ENCODE measurements at regions of chr5 and their contacts with region 1.

Region 1: DNA sequence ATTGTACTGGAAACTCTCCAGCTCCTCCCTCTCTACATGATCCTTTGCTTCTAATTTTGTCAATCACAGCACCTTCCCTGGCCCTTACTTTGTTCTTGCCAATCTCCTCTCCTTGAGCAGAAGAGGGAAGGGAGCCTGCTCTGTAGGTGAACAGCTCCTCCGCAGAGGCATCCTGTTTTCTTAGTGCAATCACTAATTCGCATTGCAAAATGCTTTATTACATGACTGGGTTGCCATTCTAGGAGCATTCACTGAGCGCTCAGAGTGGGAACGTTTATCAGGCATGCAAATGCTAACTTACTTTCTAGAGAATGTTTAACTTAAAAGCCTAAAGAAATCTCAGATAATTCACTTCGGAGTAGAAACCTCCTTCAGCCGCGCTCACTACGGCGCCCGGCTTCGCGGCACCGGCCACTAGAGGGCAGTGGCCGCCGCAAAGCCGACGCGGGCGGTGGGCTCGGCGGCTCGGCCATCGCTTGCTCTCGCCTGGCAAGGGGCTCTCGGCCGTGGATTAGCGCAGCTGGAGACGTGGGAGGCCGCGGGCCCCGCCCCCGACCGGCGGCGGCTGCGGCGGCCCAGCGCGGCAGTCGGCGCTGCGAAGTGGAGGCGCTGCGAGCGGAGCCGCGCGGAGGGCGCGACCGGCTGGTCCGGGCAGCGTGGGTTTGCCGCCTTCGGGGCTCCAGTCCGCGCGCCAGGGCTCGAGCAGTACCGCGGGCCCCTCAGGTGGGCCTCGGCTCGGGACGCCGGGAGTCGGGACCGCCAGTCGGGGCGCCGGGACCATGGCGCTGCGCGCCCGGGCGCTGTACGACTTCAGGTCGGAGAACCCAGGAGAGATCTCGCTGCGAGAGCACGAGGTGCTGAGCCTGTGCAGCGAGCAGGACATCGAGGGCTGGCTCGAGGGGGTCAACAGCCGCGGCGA is at the start of gene SNX18:
- DNase-seq: peak; percentile 92 to 95
- H3K4me3 ChIP-seq: peak within 1 kb of the TSS; percentile 86 to 98
- H3K27ac ChIP-seq: peak within 1 kb of the TSS; percentile 92 to 97
- H3K4me1 ChIP-seq: peaks cover 0 to 37% (median 12%) of the 10 kb centered on the region in 4 donors
- H3K27me3 ChIP-seq: no peaks in the 10 kb centered on the region
- CTCF ChIP-seq: peak; percentile 98 to 99

Region 2: GRCh38 chr5:54637654-54638053 is 120.2 kb after region 1 on chr5:
- intact Hi-C with region 1: loop called (anchors 10 kb)
- DNase-seq: peak; percentile 62 to 86
- H3K4me3 ChIP-seq: no peak overlapping the region
- H3K27ac ChIP-seq: peak overlapping the region; percentile 35 to 37
- H3K4me1 ChIP-seq: peaks cover 5 to 51% (median 28%) of the 10 kb centered on the region in 4 donors
- H3K27me3 ChIP-seq: no peaks in the 10 kb centered on the region
- CTCF ChIP-seq: no peak

Region 3: GRCh38 chr5:54844905-54845566 is 327.6 kb after region 1 on chr5:
- intact Hi-C with region 1: loop called (anchors 1 kb)
- DNase-seq: no peak
- H3K4me3 ChIP-seq: peak overlapping the region; percentile 25 to 34
- H3K27ac ChIP-seq: peak overlapping the region; percentile 67 to 75
- H3K4me1 ChIP-seq: peaks cover 0 to 17% (median 10%) of the 10 kb centered on the region in 4 donors
- H3K27me3 ChIP-seq: no peaks in the 10 kb centered on the region
- CTCF ChIP-seq: peak; percentile 61 to 75

Region 4: DNA sequence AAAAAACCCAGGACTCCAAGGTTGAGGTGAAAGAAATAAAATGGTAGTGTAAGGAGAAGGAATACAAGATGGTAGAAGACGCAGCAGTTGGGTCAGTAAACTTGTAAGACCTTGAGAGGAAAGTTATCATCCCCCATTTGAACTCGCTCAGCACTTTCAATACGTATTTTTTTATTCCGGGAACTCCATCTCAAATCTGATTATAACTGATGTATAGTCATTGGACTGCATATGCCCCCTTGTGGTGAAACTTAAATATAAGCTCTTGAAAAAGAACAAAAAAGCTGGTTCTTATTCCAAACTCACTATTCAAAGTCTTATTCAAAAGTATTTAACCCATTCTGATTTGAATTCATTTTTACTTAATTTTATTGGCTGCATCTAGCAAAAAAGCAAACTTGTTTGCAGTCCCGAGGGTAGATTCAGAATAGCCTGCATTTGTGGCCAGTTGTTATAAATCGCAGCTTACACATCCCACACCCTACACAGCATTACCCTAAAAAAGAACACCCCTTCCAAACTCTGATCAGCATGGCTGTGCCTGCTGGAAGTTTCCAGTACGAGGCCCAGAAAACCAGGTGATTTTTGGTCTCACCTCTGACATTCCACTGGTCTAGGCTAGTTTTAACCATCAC is 350.0 kb after region 1 on chr5:
- intact Hi-C with region 1: loop called (anchors 5 kb)
- DNase-seq: no peak
- H3K4me3 ChIP-seq: peak overlapping the region; percentile 12 to 17
- H3K27ac ChIP-seq: no peak overlapping the region
- H3K4me1 ChIP-seq: peaks cover 0 to 4% (median 0%) of the 10 kb centered on the region in 4 donors
- H3K27me3 ChIP-seq: no peaks in the 10 kb centered on the region
- CTCF ChIP-seq: peak; percentile 65 to 84

Region 5: GRCh38 chr5:55159763-55160492 is 642.5 kb after region 1 on chr5 and contains the start of gene GPX8:
- intact Hi-C with region 1: loop called (anchors 10 kb)
- DNase-seq: no peak
- H3K4me3 ChIP-seq: peak within 1 kb of the TSS; percentile 48
- H3K27ac ChIP-seq: peak within 1 kb of the TSS; percentile 14 to 62
- H3K4me1 ChIP-seq: peaks cover 0 to 20% (median 2%) of the 10 kb centered on the region in 4 donors
- H3K27me3 ChIP-seq: no peaks in the 10 kb centered on the region
- CTCF ChIP-seq: peak; percentile 49 to 52

Measured in tibial artery (tissue), 4 donors.